ENCODE measurements at regions of chr7 and their contacts with region 1.

Region 1: DNA sequence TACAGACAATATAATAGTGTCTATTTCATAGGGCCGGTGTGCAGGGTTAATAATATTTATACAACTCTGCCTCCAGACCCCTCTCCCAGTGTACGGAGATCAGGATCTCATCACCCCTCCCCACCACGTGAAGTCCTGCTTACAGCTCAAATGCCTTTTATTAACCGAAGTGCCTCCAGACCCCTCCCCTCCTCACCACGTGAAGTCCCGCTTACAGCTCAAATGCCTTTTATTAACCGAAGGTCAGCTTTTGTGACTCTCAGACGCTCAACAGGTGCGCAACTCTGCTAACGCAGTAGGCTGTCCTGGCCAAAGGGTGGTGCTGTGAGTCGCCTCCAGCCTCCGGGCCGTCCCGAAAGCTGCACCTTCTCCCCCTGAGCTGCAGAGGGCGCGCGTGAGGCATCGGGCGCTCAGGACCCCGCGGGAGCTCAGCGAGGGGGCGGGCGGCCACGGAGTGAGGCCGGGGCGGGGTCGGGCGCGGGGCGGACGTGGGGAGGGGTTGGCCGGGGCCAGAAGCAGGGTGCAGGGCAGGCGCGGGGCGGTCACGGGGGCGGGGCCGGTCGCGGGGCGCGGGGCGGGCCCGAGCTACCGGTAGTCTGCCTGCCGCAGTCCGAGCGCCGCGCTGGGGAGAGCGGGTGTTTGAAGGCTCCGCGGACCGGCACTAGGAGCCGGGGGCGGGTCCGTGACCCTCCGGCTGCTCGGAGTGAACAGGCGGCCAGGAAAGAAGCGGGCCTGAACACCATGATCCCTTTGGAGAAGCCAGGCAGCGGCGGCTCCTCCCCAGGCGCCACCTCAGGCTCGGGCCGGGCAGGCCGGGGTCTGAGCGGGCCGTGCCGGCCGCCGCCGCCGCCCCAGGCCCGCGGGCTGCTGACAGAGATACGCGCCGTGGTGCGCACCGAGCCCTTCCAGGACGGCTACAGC is at the start of gene STK17A:
- DNase-seq: peak; percentile 83
- ATAC-seq: peak; percentile 91
- H3K4me3 ChIP-seq: peak within 1 kb of the TSS; percentile 64 to 85
- H3K27ac ChIP-seq: peak within 1 kb of the TSS; percentile 82
- H3K4me1 ChIP-seq: peaks cover 9 to 22% of the 10 kb centered on the region in 2 experiments; a peak in 3 of 4 replicates
- H3K27me3 ChIP-seq: no peaks in the 10 kb centered on the region
- CTCF ChIP-seq: peak; percentile 95 to 99 (median 98)
- POLR2A ChIP-seq: peak; percentile 79
- RAD21 ChIP-seq: peak; percentile 97
- total RNA-seq, gene STK17A: 14.8 TPM

Region 2: GRCh38 chr7:41705109-41705901 is 1877.5 kb before region 1 on chr7:
- CTCF ChIA-PET with region 1: no interaction called
- POLR2A ChIA-PET with region 1: no interaction called
- RAD21 ChIA-PET with region 1: no interaction called
- intact Hi-C with region 1: no loop called
- DNase-seq: no peak
- ATAC-seq: peak; percentile 98
- H3K4me3 ChIP-seq: peak overlapping the region; percentile 41 to 52
- H3K27ac ChIP-seq: no peak overlapping the region; the same call in 1 of the 2 replicates
- H3K4me1 ChIP-seq: peaks cover 2 to 7% of the 10 kb centered on the region in 2 experiments; a peak in 2 of 4 replicates
- H3K27me3 ChIP-seq: no peaks in the 10 kb centered on the region
- CTCF ChIP-seq: peak; percentile 45 to 59 (median 57); a peak in 5 of 6 replicates
- POLR2A ChIP-seq: no peak
- RAD21 ChIP-seq: peak; percentile 78

Region 3: DNA sequence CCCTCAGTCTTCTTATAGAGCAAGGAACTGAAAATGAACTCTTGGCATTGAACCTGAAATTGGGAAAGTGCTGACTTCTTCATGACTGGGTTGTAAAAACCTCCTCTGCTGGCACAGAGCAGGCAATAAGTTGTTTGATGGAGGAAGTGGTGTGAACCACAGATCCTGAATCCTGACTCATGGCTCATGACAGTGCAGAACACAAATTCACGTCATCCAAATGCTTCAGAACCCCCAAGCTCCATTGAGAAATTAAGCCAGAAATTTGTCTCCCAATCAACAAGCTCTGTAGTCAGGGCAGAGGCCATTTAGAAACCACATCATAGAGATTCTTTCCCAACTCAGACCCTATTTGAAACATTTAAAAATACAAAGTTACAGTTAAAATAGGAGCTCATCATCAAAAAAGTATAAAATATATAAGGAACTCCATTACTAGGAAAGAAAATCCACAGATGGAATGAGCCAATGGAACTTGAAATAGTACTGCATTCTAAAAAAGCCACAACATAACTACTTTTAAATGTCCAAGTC is 10.2 kb before region 1 on chr7:
- CTCF ChIA-PET with region 1: interaction called, 38 read pairs
- POLR2A ChIA-PET with region 1: interaction called, 14 read pairs
- RAD21 ChIA-PET with region 1: interaction called in 1 of 2 experiments, 5 read pairs
- intact Hi-C with region 1: no loop called
- DNase-seq: peak; percentile 38
- ATAC-seq: no peak
- H3K4me3 ChIP-seq: no peak overlapping the region
- H3K27ac ChIP-seq: no peak overlapping the region
- H3K4me1 ChIP-seq: peaks cover 8 to 33% of the 10 kb centered on the region in 2 experiments
- H3K27me3 ChIP-seq: no peaks in the 10 kb centered on the region
- CTCF ChIP-seq: no peak
- POLR2A ChIP-seq: no peak
- RAD21 ChIP-seq: no peak

Region 4: GRCh38 chr7:43693687-43694398 is 111.1 kb after region 1 on chr7:
- CTCF ChIA-PET with region 1: interaction called, 194 read pairs
- POLR2A ChIA-PET with region 1: interaction called, 46 read pairs
- RAD21 ChIA-PET with region 1: interaction called, 5 to 35 read pairs
- intact Hi-C with region 1: no loop called
- DNase-seq: peak; percentile 32
- ATAC-seq: peak; percentile 87
- H3K4me3 ChIP-seq: peak overlapping the region in 1 of 2 experiments; percentile 38; a peak in 2 of 4 replicates
- H3K27ac ChIP-seq: peak overlapping the region; percentile 47; the same call in 1 of the 2 replicates
- H3K4me1 ChIP-seq: peaks cover 28 to 49% of the 10 kb centered on the region in 2 experiments
- H3K27me3 ChIP-seq: no peaks in the 10 kb centered on the region
- CTCF ChIP-seq: no peak
- POLR2A ChIP-seq: no peak
- RAD21 ChIP-seq: 0 out of 2 replicates have a peak, but pooled peaks have one; percentile 4

Region 5: GRCh38 chr7:43721193-43721806 is 138.5 kb after region 1 on chr7:
- CTCF ChIA-PET with region 1: interaction called, 30 read pairs
- POLR2A ChIA-PET with region 1: interaction called, 7 read pairs
- RAD21 ChIA-PET with region 1: interaction called, 3 read pairs
- intact Hi-C with region 1: loop called (anchors 1 kb)
- DNase-seq: no peak
- ATAC-seq: no peak
- H3K4me3 ChIP-seq: no peak overlapping the region
- H3K27ac ChIP-seq: no peak overlapping the region
- H3K4me1 ChIP-seq: no peaks in the 10 kb centered on the region
- H3K27me3 ChIP-seq: no peaks in the 10 kb centered on the region
- CTCF ChIP-seq: peak; percentile 39 to 79 (median 78); a peak in 5 of 6 replicates
- POLR2A ChIP-seq: no peak
- RAD21 ChIP-seq: peak; percentile 63

Region 6: GRCh38 chr7:43799589-43799988 is 216.8 kb after region 1 on chr7:
- CTCF ChIA-PET with region 1: interaction called, 12 read pairs
- POLR2A ChIA-PET with region 1: interaction called, 7 read pairs
- RAD21 ChIA-PET with region 1: no interaction called
- intact Hi-C with region 1: no loop called
- DNase-seq: no peak
- ATAC-seq: peak; percentile 80
- H3K4me3 ChIP-seq: no peak overlapping the region
- H3K27ac ChIP-seq: no peak overlapping the region
- H3K4me1 ChIP-seq: no peaks in the 10 kb centered on the region
- H3K27me3 ChIP-seq: no peaks in the 10 kb centered on the region
- CTCF ChIP-seq: peak; percentile 10 to 43 (median 29); a peak in 2 of 6 replicates
- POLR2A ChIP-seq: no peak
- RAD21 ChIP-seq: peak; percentile 72

Region 7: GRCh38 chr7:44087911-44088838 is 505.4 kb after region 1 on chr7:
- CTCF ChIA-PET with region 1: no interaction called
- POLR2A ChIA-PET with region 1: no interaction called
- RAD21 ChIA-PET with region 1: no interaction called
- intact Hi-C with region 1: no loop called
- DNase-seq: no peak
- ATAC-seq: no peak
- H3K4me3 ChIP-seq: no peak overlapping the region
- H3K27ac ChIP-seq: no peak overlapping the region
- H3K4me1 ChIP-seq: peaks cover 3 to 26% of the 10 kb centered on the region in 2 experiments
- H3K27me3 ChIP-seq: no peaks in the 10 kb centered on the region
- CTCF ChIP-seq: no peak
- POLR2A ChIP-seq: no peak
- RAD21 ChIP-seq: no peak

Region 8: GRCh38 chr7:44515590-44516268 is 933.0 kb after region 1 on chr7:
- CTCF ChIA-PET with region 1: no interaction called
- POLR2A ChIA-PET with region 1: no interaction called
- RAD21 ChIA-PET with region 1: no interaction called
- intact Hi-C with region 1: no loop called
- DNase-seq: no peak
- ATAC-seq: no peak
- H3K4me3 ChIP-seq: no peak overlapping the region
- H3K27ac ChIP-seq: no peak overlapping the region
- H3K4me1 ChIP-seq: no peaks in the 10 kb centered on the region
- H3K27me3 ChIP-seq: no peaks in the 10 kb centered on the region
- CTCF ChIP-seq: no peak
- POLR2A ChIP-seq: no peak
- RAD21 ChIP-seq: no peak